ENCODE measurements at regions of chr1 and their contacts with region 1.

Region 1: DNA sequence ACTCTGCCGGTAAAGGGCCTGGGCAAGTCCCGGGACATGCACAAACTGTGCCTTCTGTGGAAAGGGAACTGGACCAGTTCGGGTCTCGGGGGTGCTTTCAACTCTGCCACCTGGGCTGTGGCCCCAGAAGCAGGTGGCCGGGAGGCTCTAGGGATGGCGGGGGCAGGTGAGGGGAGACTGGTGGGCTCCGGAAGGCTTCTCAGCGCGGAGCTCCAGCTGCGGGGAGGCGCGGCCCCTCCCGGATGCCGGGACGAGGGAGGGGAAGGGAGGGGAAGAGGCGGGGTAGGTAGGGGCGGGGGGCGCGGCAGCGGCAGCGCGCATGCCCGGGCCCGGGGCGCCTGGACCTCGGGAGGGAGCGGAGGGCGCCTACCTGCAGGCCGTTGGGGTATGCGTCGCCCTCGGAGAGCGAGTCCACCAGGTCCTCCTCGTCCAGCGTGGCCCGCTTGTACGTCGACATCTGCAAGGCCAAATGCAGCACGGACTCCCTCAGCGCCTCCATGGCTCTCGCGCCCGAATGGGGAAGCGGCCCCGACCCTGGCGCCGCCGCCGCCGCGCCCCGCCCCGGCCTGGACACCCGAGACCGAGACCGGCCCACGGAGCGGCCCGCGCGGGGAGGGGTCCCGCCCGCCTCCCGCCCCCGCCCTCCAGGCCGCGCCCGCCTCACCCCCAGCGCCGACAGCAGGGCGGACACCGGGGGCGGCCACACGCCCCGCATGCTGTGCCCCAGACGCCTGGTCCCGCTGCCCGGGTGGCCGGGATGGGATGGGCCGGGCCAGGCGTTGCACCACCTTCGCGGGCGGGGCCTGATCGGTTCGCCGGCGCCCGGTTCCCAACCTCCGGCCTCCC is at the start of gene ECE1:
- DNase-seq: peak; percentile 84
- total RNA-seq, gene ECE1: 55.8 TPM

Region 2: GRCh38 chr1:21334214-21335087 is 44.5 kb after region 1 on chr1:
- intact Hi-C with region 1: loop called (anchors 2 kb)
- DNase-seq: peak; percentile 95

Measured in cardiac septum (tissue), 1 donor.